ENCODE measurements at regions of chr7 and their contacts with region 1.

Region 1: GRCh38 chr7:2477447-2478398 is 1.5 kb upstream of the GRIFIN start:
- DNase-seq: peak; percentile 36 to 82
- H3K4me3 ChIP-seq: no peak overlapping the region
- H3K27ac ChIP-seq: no peak overlapping the region
- H3K4me1 ChIP-seq: peaks cover 0 to 34% (median 20%) of the 10 kb centered on the region in 4 experiments; a peak in 6 of 7 replicates
- H3K27me3 ChIP-seq: no peaks in the 10 kb centered on the region; a peak in 2 of 7 replicates
- CTCF ChIP-seq: peak in 2 of 3 experiments; percentile 76 to 87; a peak in 3 of 4 replicates
- EP300 ChIP-seq: no peak
- POLR2A ChIP-seq: no peak
- RAD21 ChIP-seq: peak; percentile 85 to 86

Region 2: DNA sequence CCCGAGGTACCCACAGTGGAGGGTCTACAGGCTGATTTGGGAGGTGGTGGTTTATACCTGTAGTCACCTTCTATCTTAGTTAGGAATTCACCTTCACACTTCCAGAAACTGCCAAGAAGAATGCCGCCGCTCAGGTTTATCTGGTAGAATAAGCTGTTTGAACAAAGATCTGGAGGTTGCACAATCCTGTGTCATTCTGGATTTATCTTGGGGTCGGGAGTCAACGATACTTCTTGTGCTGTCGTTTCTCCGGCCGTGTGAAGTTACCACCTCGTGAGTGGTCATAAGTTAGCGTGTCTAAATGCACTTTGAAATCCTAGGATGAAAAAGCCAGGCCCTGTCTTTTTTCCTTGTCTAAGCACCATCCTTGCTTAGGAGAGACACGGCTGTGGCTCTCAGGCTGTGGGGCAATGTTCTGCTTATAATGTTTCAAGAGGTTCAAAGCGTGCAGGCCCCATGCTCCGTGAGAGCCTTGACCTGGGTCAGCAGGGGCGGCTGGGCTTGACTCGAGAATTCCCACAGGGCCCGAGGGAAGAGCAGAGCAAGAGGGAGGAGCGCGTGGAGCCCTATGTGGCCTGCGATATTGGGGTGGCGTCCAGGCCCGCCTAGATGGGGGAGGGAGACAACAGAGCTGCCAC is 37.0 kb before region 1 on chr7:
- CTCF ChIA-PET with region 1: no interaction called
- POLR2A ChIA-PET with region 1: no interaction called
- DNase-seq: no peak
- H3K4me3 ChIP-seq: no peak overlapping the region
- H3K27ac ChIP-seq: no peak overlapping the region
- H3K4me1 ChIP-seq: no peaks in the 10 kb centered on the region
- H3K27me3 ChIP-seq: no peaks in the 10 kb centered on the region
- CTCF ChIP-seq: no peak
- EP300 ChIP-seq: no peak
- POLR2A ChIP-seq: no peak
- RAD21 ChIP-seq: no peak

Region 3: DNA sequence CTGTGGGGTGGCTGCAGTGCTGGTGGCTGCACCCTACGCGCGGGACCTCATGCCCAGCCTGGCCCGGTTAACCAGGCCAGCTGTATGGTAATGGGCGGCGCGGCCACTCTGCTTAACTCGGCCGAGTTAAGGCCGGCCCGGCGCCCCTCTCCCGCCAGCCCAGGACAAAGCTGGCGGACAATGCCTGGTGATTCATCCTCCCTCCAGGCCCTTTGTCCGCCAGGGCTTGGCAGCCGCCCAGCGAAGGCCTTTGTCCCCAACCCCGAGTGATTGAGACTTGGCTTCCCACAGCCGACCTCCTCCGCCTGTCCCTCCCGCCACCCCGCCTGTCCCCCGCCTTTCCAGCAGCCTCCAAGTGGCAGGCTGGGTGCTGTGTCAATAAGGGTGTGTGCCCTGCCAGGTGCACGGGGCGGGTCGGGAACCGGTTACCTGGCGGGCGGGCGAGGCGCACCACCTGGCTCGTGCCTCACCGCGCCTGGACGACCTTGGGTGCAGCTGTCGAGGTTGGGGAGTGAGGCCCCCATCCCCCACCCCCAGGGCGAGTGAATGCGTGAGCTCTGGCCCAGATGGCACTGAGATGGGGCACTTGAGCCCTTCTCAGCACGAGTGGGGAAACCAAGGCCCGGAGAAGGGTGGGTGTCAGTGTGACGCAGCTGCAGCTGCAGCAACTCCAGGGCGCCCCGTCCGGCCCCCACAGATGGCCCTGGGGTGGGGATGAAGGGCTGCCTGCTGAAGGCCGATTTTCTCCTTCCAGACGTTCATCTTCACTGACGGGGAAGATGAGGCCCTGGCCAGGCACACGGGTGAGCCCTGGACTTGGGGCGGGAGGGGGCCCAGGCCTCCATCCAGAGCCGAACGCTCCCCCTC is 46.5 kb after region 1 on chr7:
- CTCF ChIA-PET with region 1: interaction called, 6 read pairs
- POLR2A ChIA-PET with region 1: interaction called, 11 read pairs
- DNase-seq: peak in 1 of 2 experiments; percentile 78
- H3K4me3 ChIP-seq: peak overlapping the region in 3 of 4 experiments; percentile 23 to 73 (median 38); a peak in 5 of 8 replicates
- H3K27ac ChIP-seq: peak overlapping the region; percentile 78
- H3K4me1 ChIP-seq: peaks cover 0 to 61% (median 44%) of the 10 kb centered on the region in 4 experiments; a peak in 6 of 7 replicates
- H3K27me3 ChIP-seq: peaks cover 0 to 12% (median 3%) of the 10 kb centered on the region in 4 experiments; a peak in 5 of 7 replicates
- CTCF ChIP-seq: no peak
- EP300 ChIP-seq: no peak
- POLR2A ChIP-seq: peak in 1 of 2 experiments; percentile 32; a peak in 1 of 3 replicates
- RAD21 ChIP-seq: no peak

Measured in H1 (cell line).